ENCODE measurements at regions of chr6 and their contacts with region 1.

Region 1: DNA sequence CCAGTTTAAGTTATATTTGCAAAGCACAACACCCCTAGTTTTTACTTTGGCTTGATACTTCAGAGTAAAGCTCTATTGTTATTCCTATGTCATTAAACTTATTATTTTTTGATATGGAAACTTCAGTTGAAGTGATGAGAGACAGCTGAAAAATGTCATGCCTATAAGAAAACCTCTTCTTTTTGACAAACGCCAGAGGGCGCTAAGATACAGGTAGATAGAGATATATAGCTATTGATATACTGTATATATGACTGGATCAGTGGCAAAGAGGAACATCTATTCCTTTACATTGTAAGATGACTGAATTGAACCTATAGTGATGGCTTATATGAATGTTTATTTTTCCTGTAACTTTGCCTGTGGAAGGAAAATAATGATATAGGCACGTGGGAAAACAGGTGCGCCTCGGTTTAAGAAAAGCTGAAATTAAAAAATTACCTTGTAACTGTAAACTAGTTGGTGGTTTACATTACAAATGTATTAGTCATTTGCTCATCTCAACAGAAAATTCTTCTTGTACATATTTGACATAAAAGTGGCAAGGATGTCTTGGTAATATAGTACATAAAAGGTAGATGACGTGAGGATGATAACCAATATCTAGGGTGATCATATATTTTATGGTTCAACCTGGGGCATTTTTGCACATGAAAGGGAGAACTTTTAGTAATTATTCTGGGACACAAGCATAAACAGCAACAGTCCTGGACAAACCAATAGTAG is 74.1 kb downstream of the LAMA4 start:
- DNase-seq: peak; percentile 90
- ATAC-seq: peak; percentile 91
- H3K4me3 ChIP-seq: no peak overlapping the region
- H3K27ac ChIP-seq: no peak overlapping the region
- H3K4me1 ChIP-seq: no peaks in the 10 kb centered on the region
- H3K27me3 ChIP-seq: peaks cover 0 to 5% of the 10 kb centered on the region in 2 experiments; a peak in 2 of 5 replicates
- CTCF ChIP-seq: peak; percentile 79
- EP300 ChIP-seq: no peak
- POLR2A ChIP-seq: no peak
- RAD21 ChIP-seq: peak; percentile 71

Region 2: GRCh38 chr6:112203577-112204349 is 23.5 kb after region 1 on chr6:
- CTCF ChIA-PET with region 1: no interaction called
- POLR2A ChIA-PET with region 1: no interaction called
- in situ Hi-C with region 1: no loop called
- intact Hi-C with region 1: no loop called
- DNase-seq: peak; percentile 10
- ATAC-seq: peak; percentile 62
- H3K4me3 ChIP-seq: no peak overlapping the region
- H3K27ac ChIP-seq: no peak overlapping the region
- H3K4me1 ChIP-seq: peaks cover 16% of the 10 kb centered on the region
- H3K27me3 ChIP-seq: no peaks in the 10 kb centered on the region; a peak in 1 of 5 replicates
- CTCF ChIP-seq: no peak
- EP300 ChIP-seq: no peak
- POLR2A ChIP-seq: no peak
- RAD21 ChIP-seq: no peak

Region 3: GRCh38 chr6:112269114-112269513 is 88.9 kb after region 1 on chr6:
- CTCF ChIA-PET with region 1: no interaction called
- POLR2A ChIA-PET with region 1: no interaction called
- in situ Hi-C with region 1: no loop called
- intact Hi-C with region 1: no loop called
- DNase-seq: no peak
- ATAC-seq: no peak
- H3K4me3 ChIP-seq: no peak overlapping the region
- H3K27ac ChIP-seq: no peak overlapping the region
- H3K4me1 ChIP-seq: no peaks in the 10 kb centered on the region
- H3K27me3 ChIP-seq: no peaks in the 10 kb centered on the region; a peak in 1 of 5 replicates
- CTCF ChIP-seq: no peak
- EP300 ChIP-seq: no peak
- POLR2A ChIP-seq: no peak
- RAD21 ChIP-seq: no peak

Region 4: DNA sequence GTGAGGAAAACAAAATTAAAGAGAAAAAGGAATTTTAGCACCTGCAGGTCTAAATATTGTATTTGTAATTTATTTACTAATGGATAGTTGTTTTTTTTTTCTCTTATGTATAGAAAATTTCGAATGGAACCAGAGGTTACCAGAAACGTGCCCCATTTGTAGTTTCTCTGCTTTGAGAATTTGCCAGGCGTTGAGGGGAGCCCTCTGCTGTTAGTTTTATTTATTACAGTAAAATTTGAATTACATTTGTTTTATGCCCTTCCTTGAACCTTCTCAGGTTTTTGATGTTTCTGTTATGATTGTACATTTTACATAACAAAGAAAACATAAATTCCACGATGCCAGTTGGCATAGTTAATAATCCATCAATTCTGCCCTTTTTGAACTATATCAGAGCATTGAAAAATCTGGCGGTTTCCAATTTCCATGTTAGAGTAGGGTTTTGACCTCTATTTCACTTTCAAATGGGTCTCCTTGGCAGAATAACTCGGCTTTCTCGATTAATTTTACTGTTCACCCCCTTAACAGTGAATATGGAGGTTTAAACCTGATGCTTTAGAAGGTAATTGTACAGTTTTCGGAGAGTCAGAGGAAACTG is 131.8 kb after region 1 on chr6:
- CTCF ChIA-PET with region 1: interaction called, 70 read pairs
- POLR2A ChIA-PET with region 1: no interaction called
- in situ Hi-C with region 1: loop called (anchors 5 kb)
- intact Hi-C with region 1: loop called (anchors 1 kb)
- DNase-seq: peak; percentile 7
- ATAC-seq: peak; percentile 50; the same call in 1 of the 3 replicates
- H3K4me3 ChIP-seq: no peak overlapping the region
- H3K27ac ChIP-seq: no peak overlapping the region
- H3K4me1 ChIP-seq: no peaks in the 10 kb centered on the region
- H3K27me3 ChIP-seq: no peaks in the 10 kb centered on the region
- CTCF ChIP-seq: peak; percentile 56
- EP300 ChIP-seq: no peak
- POLR2A ChIP-seq: no peak
- RAD21 ChIP-seq: no peak

Region 5: DNA sequence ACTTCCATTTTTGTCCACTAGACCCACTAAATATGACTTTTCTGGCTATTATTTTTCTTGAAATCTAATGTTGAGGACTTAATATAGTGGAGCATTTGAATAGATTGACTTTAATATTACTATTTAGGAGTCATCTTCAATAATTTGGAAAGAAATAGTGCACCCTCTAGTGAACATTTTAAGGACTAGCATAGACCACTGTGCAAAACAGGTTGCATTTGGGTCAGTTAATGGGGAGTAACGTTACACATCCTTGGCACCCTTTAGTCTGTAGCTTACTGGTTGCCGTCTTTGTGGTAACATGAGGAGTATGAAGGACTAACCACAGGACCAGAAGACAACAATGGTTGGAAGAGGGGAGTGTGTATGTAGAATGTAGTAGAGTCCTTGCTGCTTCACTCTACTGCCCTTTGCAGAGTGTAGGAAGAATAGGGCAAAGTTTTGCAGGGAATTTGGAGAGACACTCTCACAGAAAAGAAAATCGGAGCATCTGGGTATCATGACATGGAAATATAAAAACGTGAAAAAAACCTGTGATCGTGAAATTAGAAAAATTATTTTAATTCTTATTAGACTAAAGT is 192.1 kb after region 1 on chr6:
- CTCF ChIA-PET with region 1: interaction called, 3 read pairs
- POLR2A ChIA-PET with region 1: no interaction called
- in situ Hi-C with region 1: no loop called
- intact Hi-C with region 1: loop called (anchors 1 kb)
- DNase-seq: no peak
- ATAC-seq: peak; percentile 66
- H3K4me3 ChIP-seq: no peak overlapping the region
- H3K27ac ChIP-seq: no peak overlapping the region
- H3K4me1 ChIP-seq: no peaks in the 10 kb centered on the region
- H3K27me3 ChIP-seq: no peaks in the 10 kb centered on the region
- CTCF ChIP-seq: peak; percentile 28; the same call in 1 of the 2 replicates
- EP300 ChIP-seq: no peak
- POLR2A ChIP-seq: no peak
- RAD21 ChIP-seq: no peak